H1 (cell line): ENCODE measurements at regions of chr2 and their contacts with region 1.

Region 1: GRCh38 chr2:42141687-42142546 is 27.2 kb upstream of the EML4 start:
- DNase-seq: no peak
- H3K4me3 ChIP-seq: peak overlapping the region; percentile 12 to 51 (median 34); a peak in 6 of 8 replicates
- H3K27ac ChIP-seq: peak overlapping the region; percentile 28; the same call in 1 of the 2 replicates
- H3K4me1 ChIP-seq: peaks cover 0 to 17% (median 6%) of the 10 kb centered on the region in 4 experiments; a peak in 5 of 7 replicates
- H3K27me3 ChIP-seq: no peaks in the 10 kb centered on the region
- CTCF ChIP-seq: no peak
- EP300 ChIP-seq: no peak
- POLR2A ChIP-seq: no peak
- RAD21 ChIP-seq: no peak

Region 2: GRCh38 chr2:42169874-42170521 is 28.1 kb after region 1 on chr2:
- CTCF ChIA-PET with region 1: interaction called, 3 read pairs
- POLR2A ChIA-PET with region 1: interaction called, 10 read pairs
- DNase-seq: no peak
- H3K4me3 ChIP-seq: peak overlapping the region; percentile 80 to 93 (median 86)
- H3K27ac ChIP-seq: peak overlapping the region; percentile 71
- H3K4me1 ChIP-seq: peaks cover 0 to 4% (median 2%) of the 10 kb centered on the region in 4 experiments; a peak in 4 of 7 replicates
- H3K27me3 ChIP-seq: no peaks in the 10 kb centered on the region; a peak in 1 of 7 replicates
- CTCF ChIP-seq: no peak
- EP300 ChIP-seq: no peak
- POLR2A ChIP-seq: no peak
- RAD21 ChIP-seq: no peak

Region 3: GRCh38 chr2:42249887-42250286 is 108.0 kb after region 1 on chr2:
- CTCF ChIA-PET with region 1: no interaction called
- POLR2A ChIA-PET with region 1: no interaction called
- DNase-seq: no peak
- H3K4me3 ChIP-seq: no peak overlapping the region
- H3K27ac ChIP-seq: no peak overlapping the region
- H3K4me1 ChIP-seq: peaks cover 0 to 4% (median 0%) of the 10 kb centered on the region in 4 experiments; a peak in 1 of 7 replicates
- H3K27me3 ChIP-seq: no peaks in the 10 kb centered on the region
- CTCF ChIP-seq: no peak
- EP300 ChIP-seq: no peak
- POLR2A ChIP-seq: no peak
- RAD21 ChIP-seq: no peak